Activated CD4-positive, alpha-beta T cell treated with anti-CD3 and anti-CD28 coated beads for 36 hours (primary cell): ENCODE measurements at regions of chr19 and their contacts with region 1.

Region 1: GRCh38 chr19:41641879-41642485 is 15.1 kb upstream of the CEACAM4 start:
- DNase-seq: peak; percentile 82
- ATAC-seq: peak; percentile 76
- H3K4me3 Mint-ChIP-seq: no peak overlapping the region
- H3K27ac Mint-ChIP-seq: no peak overlapping the region
- H3K4me1 Mint-ChIP-seq: peaks cover 19% of the 10 kb centered on the region
- H3K27me3 Mint-ChIP-seq: peaks cover 7% of the 10 kb centered on the region

Region 2: GRCh38 chr19:40908976-40909375 is 733.0 kb before region 1 on chr19:
- CTCF ChIA-PET with region 1: no interaction called
- POLR2A ChIA-PET with region 1: no interaction called
- intact Hi-C with region 1: no loop called
- DNase-seq: peak; percentile 69
- ATAC-seq: peak; percentile 72
- H3K4me3 Mint-ChIP-seq: peak overlapping the region; percentile 62
- H3K27ac Mint-ChIP-seq: no peak overlapping the region
- H3K4me1 Mint-ChIP-seq: peaks cover 13% of the 10 kb centered on the region
- H3K27me3 Mint-ChIP-seq: peaks cover 19% of the 10 kb centered on the region

Region 3: GRCh38 chr19:41657157-41657556 is 15.2 kb after region 1 on chr19:
- CTCF ChIA-PET with region 1: interaction called, 143 read pairs
- POLR2A ChIA-PET with region 1: no interaction called
- intact Hi-C with region 1: no loop called
- DNase-seq: no peak
- ATAC-seq: no peak
- H3K4me3 Mint-ChIP-seq: no peak overlapping the region
- H3K27ac Mint-ChIP-seq: no peak overlapping the region
- H3K4me1 Mint-ChIP-seq: peaks cover 6% of the 10 kb centered on the region
- H3K27me3 Mint-ChIP-seq: peaks cover 41% of the 10 kb centered on the region

Region 4: GRCh38 chr19:41691268-41691970 is 49.4 kb after region 1 on chr19:
- CTCF ChIA-PET with region 1: interaction called, 74 read pairs
- POLR2A ChIA-PET with region 1: no interaction called
- intact Hi-C with region 1: loop called (anchors 5 kb)
- DNase-seq: peak; percentile 52
- ATAC-seq: peak; percentile 58
- H3K4me3 Mint-ChIP-seq: no peak overlapping the region
- H3K27ac Mint-ChIP-seq: no peak overlapping the region
- H3K4me1 Mint-ChIP-seq: no peaks in the 10 kb centered on the region
- H3K27me3 Mint-ChIP-seq: peaks cover 19% of the 10 kb centered on the region

Region 5: DNA sequence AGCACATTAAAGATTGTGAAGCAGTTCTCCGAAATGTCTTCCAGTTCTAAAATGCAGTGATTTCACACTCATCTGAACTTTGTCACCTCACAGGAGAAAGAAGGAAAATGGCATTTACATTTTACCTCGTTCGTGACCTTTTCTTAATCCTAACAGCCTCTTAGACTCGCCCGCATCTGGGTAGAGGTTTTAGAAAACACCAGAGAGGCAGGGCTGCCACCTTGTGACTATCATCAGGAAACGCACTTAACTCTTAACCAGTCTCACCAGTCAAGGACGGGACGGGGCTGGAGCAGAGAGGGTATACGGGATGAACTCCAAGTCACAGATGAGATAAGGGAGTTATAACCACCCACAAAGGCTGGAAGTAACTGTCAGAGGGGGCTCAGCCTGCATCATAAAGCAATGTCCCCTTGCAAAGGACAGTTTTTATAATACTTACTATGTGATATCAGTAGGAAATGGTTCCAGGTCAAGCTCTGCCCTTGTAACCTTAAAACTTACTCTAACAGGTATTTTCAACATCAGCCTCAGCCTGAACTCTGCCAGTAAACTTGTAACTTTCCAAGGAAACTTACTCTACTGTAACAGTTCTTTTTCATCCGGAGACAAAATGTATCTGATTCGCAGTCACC is 104.7 kb after region 1 on chr19:
- CTCF ChIA-PET with region 1: interaction called, 18 read pairs
- POLR2A ChIA-PET with region 1: no interaction called
- intact Hi-C with region 1: loop called (anchors 5 kb)
- DNase-seq: peak; percentile 75
- ATAC-seq: peak; percentile 95
- H3K4me3 Mint-ChIP-seq: no peak overlapping the region
- H3K27ac Mint-ChIP-seq: no peak overlapping the region
- H3K4me1 Mint-ChIP-seq: peaks cover under 1% of the 10 kb centered on the region
- H3K27me3 Mint-ChIP-seq: peaks cover 62% of the 10 kb centered on the region

Region 6: DNA sequence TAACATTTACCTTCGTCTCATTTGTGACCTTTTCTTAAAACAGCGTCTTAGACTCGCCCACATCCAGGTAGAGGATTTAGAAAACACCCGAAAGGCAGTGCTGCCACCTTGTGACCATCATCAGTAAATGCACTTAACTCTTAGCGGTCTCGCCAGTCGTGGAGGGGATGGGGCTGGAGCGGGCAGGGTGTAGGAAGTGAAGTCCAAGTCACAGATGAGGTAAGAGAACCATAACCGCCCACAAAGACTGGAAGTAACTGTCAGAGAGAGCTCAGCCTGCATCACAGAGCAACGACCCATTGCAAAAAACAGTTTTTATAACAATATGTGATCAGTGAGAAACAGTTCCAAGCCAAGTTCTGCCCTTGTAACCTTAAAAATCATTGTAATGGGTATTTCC is 143.7 kb after region 1 on chr19:
- CTCF ChIA-PET with region 1: interaction called, 5 read pairs
- POLR2A ChIA-PET with region 1: no interaction called
- intact Hi-C with region 1: loop called in 1 of 2 experiments (anchors 5 kb)
- DNase-seq: peak; percentile 85
- ATAC-seq: peak; percentile 95
- H3K4me3 Mint-ChIP-seq: no peak overlapping the region
- H3K27ac Mint-ChIP-seq: no peak overlapping the region
- H3K4me1 Mint-ChIP-seq: peaks cover 17% of the 10 kb centered on the region
- H3K27me3 Mint-ChIP-seq: peaks cover 51% of the 10 kb centered on the region